Dorsolateral prefrontal cortex (tissue), 120 donors: ENCODE measurements at regions of chr7 and their contacts with region 1.

Region 1: DNA sequence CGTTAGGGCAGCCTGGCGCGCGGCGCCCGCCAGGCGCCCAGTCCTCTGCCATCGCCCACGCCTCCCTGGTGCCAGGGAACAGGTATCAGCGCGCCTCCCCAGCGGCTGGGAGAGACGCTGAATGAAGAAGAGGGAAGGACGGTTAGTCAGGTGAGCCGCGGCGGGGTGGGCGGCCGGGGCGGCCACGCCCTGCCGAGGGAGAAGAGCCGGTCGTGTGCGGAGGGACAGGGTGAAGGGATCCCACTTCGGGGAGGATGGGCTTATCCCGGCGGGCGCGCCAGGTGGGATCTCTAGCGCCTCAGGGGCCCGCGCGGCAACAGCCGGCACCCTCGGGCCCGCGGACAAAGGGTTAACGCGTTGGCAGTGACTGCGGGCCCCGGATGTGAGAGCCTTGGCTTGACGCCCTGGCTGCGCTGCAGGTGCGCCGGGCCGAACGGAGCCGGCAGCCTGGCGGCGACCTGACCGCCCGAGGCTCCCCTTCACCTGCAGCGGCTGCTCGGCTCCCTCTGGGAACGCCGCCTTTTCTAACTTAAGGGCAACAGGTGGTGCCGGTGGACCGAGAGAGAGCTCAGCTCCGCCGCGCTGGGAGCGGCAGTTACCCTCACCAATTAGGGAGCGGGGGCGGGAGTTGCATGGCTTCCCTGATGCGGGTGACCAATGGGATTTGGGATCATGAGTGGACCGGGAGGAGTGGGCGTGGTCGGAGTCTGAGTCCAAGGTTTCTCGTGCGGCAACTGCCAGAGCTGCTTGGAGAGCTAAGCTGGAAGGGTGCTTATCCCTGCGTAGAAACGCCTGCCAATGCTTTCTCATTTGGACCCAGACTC is at the start of gene ARL4A:
- DNase-seq: peak; percentile 95 to 100 (median 99)
- H3K4me3 ChIP-seq: peak within 1 kb of the TSS; percentile 72 to 100 (median 93)
- H3K27ac ChIP-seq: peak within 1 kb of the TSS; percentile 53 to 97 (median 89)
- H3K27me3 ChIP-seq: no peaks in the 10 kb centered on the region
- CTCF ChIP-seq: peak in 47 of 56 donors; percentile 4 to 68 (median 40)
- total RNA-seq, gene ARL4A: 13.2 to 59.1 (median 33.1) TPM

Region 2: GRCh38 chr7:12162415-12163113 is 524.5 kb before region 1 on chr7:
- intact Hi-C with region 1: no loop called
- DNase-seq: no peak
- H3K4me3 ChIP-seq: no peak overlapping the region
- H3K27ac ChIP-seq: no peak overlapping the region
- H3K27me3 ChIP-seq: no peaks in the 10 kb centered on the region
- CTCF ChIP-seq: no peak

Region 3: GRCh38 chr7:13117103-13117502 is 430.0 kb after region 1 on chr7:
- intact Hi-C with region 1: loop called (anchors 5 to 10 kb)
- DNase-seq: no peak
- H3K4me3 ChIP-seq: no peak overlapping the region
- H3K27ac ChIP-seq: no peak overlapping the region
- H3K27me3 ChIP-seq: no peaks in the 10 kb centered on the region
- CTCF ChIP-seq: peak in 36 of 56 donors; percentile 9 to 46 (median 28)

Region 4: GRCh38 chr7:13179102-13179501 is 492.0 kb after region 1 on chr7:
- intact Hi-C with region 1: loop called (anchors 10 kb)
- DNase-seq: no peak
- H3K4me3 ChIP-seq: no peak overlapping the region
- H3K27ac ChIP-seq: no peak overlapping the region
- H3K27me3 ChIP-seq: peaks cover 0 to 10% (median 0%) of the 10 kb centered on the region in 45 donors
- CTCF ChIP-seq: peak in 26 of 56 donors; percentile 4 to 58 (median 28)

Region 5: DNA sequence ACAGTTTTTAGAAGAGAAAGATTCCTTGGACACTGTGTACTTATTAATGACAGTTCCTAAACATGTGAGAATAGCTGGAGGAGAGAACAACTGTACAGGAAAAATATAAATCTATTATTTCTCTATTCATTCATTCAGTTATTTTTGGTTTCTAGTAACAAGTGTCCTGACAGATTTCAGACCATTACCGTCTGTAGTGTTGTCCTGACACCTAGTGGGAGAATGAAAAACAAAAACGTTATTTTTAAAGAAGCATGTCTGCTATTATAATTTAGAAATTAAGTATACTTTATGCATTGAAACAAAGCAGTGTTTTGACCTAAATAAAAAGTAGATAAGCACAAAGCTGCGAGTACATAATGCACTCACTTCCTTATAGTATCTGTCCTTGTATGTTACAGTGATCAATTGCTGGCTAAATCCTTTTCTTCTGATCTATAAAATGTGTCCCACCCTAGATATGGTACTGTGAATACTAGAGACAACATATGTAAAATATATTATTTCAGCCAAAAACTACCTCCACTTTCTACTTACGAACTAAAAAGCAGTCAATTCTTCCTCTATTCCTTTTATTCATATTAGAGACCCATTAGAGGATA is 575.9 kb after region 1 on chr7:
- intact Hi-C with region 1: loop called (anchors 2 to 5 kb)
- DNase-seq: no peak
- H3K4me3 ChIP-seq: no peak overlapping the region
- H3K27ac ChIP-seq: no peak overlapping the region
- H3K27me3 ChIP-seq: peaks cover 0 to 3% (median 0%) of the 10 kb centered on the region in 45 donors
- CTCF ChIP-seq: peak; percentile 58 to 93 (median 75)